Activated T-helper 1 cell treated with anti-CD3 and anti-CD28 coated beads, Interleukin-12 subunit alpha, Interleukin-12 subunit beta, Interleukin-2, Interleukin-4 antibody, amounts not matched to agents 30 ng/mL and 10 ng/mL and 1 ng/mL, durations not matched to agents 14 hours and 24 hours and 36 hours (primary cell): ENCODE measurements at regions of chr3 and their contacts with region 1.

Region 1: GRCh38 chr3:108328821-108329486 is 32.6 kb downstream of the HHLA2 start:
- DNase-seq: no peak
- H3K4me3 Mint-ChIP-seq: peak overlapping the region; percentile 16
- H3K27ac Mint-ChIP-seq: peak overlapping the region; percentile 21
- H3K4me1 Mint-ChIP-seq: peaks cover 48% of the 10 kb centered on the region
- H3K27me3 Mint-ChIP-seq: no peaks in the 10 kb centered on the region

Region 2: DNA sequence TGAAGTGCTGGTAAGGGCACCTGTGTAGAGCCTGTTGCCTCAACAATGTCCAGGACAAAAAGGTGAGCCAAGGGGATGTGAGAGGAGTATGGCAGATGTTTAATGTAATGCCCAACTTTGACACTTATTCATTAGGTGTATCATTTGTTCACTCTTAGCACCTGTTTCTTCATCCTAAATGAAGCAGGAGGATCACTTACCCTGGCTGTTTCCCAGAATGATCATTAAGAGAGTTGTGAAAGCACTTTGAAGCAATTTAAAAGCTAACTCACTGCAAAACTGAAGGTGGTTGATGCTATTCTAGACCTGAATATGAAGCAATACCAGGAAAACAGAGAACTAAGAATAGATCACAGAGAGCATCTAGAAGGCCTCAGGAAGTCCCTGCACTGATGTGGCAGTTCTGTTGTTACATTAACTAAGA is 36.0 kb before region 1 on chr3:
- intact Hi-C with region 1: loop called (anchors 2 kb)
- DNase-seq: no peak
- H3K4me3 Mint-ChIP-seq: peak overlapping the region; percentile 53
- H3K27ac Mint-ChIP-seq: peak overlapping the region; percentile 83
- H3K4me1 Mint-ChIP-seq: peaks cover 64% of the 10 kb centered on the region
- H3K27me3 Mint-ChIP-seq: peaks cover 2% of the 10 kb centered on the region

Region 3: DNA sequence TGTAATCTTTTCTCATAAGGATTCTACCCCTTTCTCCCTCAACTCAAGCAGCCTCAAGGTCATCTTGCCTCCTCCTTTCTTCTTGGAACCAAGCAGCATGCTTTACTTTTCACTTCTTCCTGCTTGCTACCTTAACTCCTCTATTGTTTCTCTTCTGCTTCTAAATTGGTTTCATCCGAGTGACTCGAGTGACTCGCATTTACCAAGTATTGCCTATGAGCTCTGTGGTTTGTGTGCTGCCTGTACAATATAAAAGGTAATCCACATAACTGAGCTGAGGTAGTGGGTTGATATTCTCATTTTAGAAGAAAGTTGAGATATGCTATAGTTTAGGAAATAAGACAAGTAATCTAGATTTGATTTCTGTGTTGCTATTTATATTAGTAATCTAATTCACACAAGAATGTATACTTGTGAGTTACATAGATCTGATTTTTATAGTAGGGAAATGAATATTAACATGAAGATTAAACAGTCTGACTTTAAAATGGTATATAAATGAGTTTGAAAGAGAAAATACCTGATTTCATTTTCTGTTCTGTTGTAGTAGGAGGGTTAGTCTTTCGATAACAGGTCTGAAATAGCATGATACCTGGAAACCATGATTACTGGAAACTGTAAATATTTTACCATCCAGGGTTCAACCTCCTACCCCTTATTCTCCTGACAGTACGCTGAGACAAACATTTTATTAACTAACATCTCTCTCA is 27.1 kb before region 1 on chr3:
- intact Hi-C with region 1: loop called (anchors 2 kb)
- DNase-seq: no peak
- H3K4me3 Mint-ChIP-seq: peak overlapping the region; percentile 67
- H3K27ac Mint-ChIP-seq: peak overlapping the region; percentile 85
- H3K4me1 Mint-ChIP-seq: peaks cover 60% of the 10 kb centered on the region
- H3K27me3 Mint-ChIP-seq: no peaks in the 10 kb centered on the region